ENCODE measurements at regions of chr3 and their contacts with region 1.

Region 1: DNA sequence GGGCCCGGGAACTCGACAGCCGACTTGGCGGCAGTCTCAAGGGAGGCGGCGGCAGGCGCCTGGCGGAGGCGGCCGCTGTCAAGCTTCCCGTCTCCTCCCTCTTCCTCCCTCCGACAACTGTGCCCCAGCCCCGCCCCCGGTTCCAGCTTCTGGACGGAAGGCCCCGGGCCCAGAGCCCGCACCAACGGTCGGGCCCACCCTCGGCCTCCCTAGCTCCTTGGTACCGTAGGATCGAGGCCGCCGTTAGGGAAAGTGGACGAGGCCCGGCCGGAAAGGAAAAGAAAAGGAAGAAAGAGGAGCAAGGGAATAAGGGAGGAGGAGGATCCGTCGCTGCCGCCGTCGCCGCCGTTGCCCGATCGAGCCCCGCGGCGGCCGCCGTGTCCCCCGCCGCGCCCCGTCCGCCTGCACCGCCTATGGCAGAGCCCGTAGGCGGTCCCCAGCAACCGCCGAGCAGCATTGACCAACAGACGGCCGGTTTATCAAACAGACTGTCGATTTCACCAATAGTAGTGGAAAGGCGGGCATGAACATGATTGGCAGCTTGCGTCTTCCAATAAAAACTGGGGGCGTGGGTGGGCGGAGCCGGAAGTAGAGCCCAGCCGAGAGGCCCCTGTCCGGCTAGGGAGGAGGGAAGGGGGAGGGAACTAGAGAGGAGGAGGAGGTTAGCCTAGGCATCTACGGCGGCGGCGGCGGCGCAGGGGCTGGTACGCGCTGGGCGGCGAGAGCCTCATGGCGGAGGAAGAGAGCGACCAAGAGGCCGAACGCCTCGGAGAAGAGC is at the starts of genes CGGBP1 and ZNF654:
- DNase-seq: peak; percentile 98
- H3K4me3 ChIP-seq: peak within 1 kb of the TSS; percentile 90 to 93
- H3K27ac ChIP-seq: peak within 1 kb of the TSS; percentile 94 to 98
- H3K4me1 ChIP-seq: no peaks in the 10 kb centered on the region
- H3K27me3 ChIP-seq: no peaks in the 10 kb centered on the region
- CTCF ChIP-seq: peak in 1 of 4 experiments; percentile 3
- POLR2A ChIP-seq: peak; percentile 89
- total RNA-seq, gene CGGBP1: 48.9 to 57.6 TPM
- total RNA-seq, gene ZNF654: 12.5 to 18.1 TPM

Region 2: GRCh38 chr3:88031642-88032077 is 27.1 kb before region 1 on chr3:
- intact Hi-C with region 1: no loop called
- DNase-seq: no peak
- H3K4me3 ChIP-seq: peak overlapping the region; percentile 0 to 14
- H3K27ac ChIP-seq: peak overlapping the region; percentile 20 to 47
- H3K4me1 ChIP-seq: no peaks in the 10 kb centered on the region
- H3K27me3 ChIP-seq: no peaks in the 10 kb centered on the region
- CTCF ChIP-seq: no peak
- POLR2A ChIP-seq: no peak

Region 3: GRCh38 chr3:88113311-88114162 is 54.8 kb after region 1 on chr3:
- intact Hi-C with region 1: loop called (anchors 10 kb)
- DNase-seq: peak; percentile 62
- H3K4me3 ChIP-seq: no peak overlapping the region
- H3K27ac ChIP-seq: no peak overlapping the region
- H3K4me1 ChIP-seq: no peaks in the 10 kb centered on the region
- H3K27me3 ChIP-seq: no peaks in the 10 kb centered on the region
- CTCF ChIP-seq: peak; percentile 26 to 63 (median 56)
- POLR2A ChIP-seq: no peak

Region 4: GRCh38 chr3:88149509-88150362 is 91.0 kb after region 1 on chr3 and contains the start of gene C3orf38:
- intact Hi-C with region 1: loop called (anchors 1 kb)
- DNase-seq: peak; percentile 84
- H3K4me3 ChIP-seq: peak within 1 kb of the TSS; percentile 73
- H3K27ac ChIP-seq: peak within 1 kb of the TSS; percentile 93
- H3K4me1 ChIP-seq: no peaks in the 10 kb centered on the region
- H3K27me3 ChIP-seq: no peaks in the 10 kb centered on the region
- CTCF ChIP-seq: peak in 1 of 4 experiments; percentile 17
- POLR2A ChIP-seq: peak; percentile 41
- total RNA-seq, gene C3orf38: 16.0 to 33.3 TPM

Measured in prostate gland (tissue), 2 donors.